Naive thymus-derived CD4-positive, alpha-beta T cell (primary cell): ENCODE measurements at regions of chr14 and their contacts with region 1.

Region 1: DNA sequence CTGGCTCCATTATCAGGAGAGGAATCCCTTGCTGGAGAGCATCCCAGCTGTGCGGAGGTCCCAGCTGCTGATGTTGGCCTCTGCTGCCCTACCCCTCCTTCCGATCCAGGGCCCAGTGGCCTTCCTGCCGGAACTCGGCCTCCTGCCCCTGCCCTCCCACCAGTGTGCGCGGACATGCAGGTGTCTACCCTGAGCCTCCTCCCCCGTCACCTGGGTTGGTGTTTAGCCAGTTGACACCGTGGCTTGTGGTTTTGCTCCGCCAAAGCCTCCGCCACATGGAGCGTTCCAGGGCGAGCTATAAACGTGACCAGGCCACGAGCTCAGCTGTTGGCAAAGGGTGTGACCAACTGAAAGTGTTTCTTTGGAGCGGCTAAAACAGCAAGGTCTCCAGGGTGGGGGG is 1104.3 kb downstream of the BCL11B start:
- DNase-seq: peak in 3 of 9 donors; percentile 34 to 45 (median 39)
- ATAC-seq: peak; percentile 27
- H3K4me3 ChIP-seq: peak overlapping the region; percentile 39
- H3K4me3 Mint-ChIP-seq: peak overlapping the region; percentile 49 to 84 (median 73)
- H3K27ac ChIP-seq: peak overlapping the region; percentile 81
- H3K27ac Mint-ChIP-seq: peak overlapping the region; percentile 83 to 100 (median 97)
- H3K4me1 ChIP-seq: peaks cover 55 to 88% of the 10 kb centered on the region in 2 donors
- H3K4me1 Mint-ChIP-seq: peaks cover 48 to 100% (median 96%) of the 10 kb centered on the region in 7 donors
- H3K27me3 ChIP-seq: no peaks in the 10 kb centered on the region
- H3K27me3 Mint-ChIP-seq: no peaks in the 10 kb centered on the region

Region 2: GRCh38 chr14:98154254-98154653 is 13.5 kb before region 1 on chr14:
- CTCF ChIA-PET with region 1: no interaction called
- POLR2A ChIA-PET with region 1: interaction called, 48 read pairs
- intact Hi-C with region 1: loop called in 1 of 2 experiments (anchors 1 kb)
- DNase-seq: no peak
- ATAC-seq: no peak
- H3K4me3 ChIP-seq: no peak overlapping the region
- H3K4me3 Mint-ChIP-seq: peak overlapping the region in 1 of 10 donors; percentile 42
- H3K27ac ChIP-seq: no peak overlapping the region
- H3K27ac Mint-ChIP-seq: peak overlapping the region in 6 of 9 donors; percentile 5 to 81 (median 35)
- H3K4me1 ChIP-seq: peaks cover 0 to 51% of the 10 kb centered on the region in 2 donors
- H3K4me1 Mint-ChIP-seq: peaks cover 23 to 86% (median 79%) of the 10 kb centered on the region in 7 donors
- H3K27me3 ChIP-seq: no peaks in the 10 kb centered on the region
- H3K27me3 Mint-ChIP-seq: no peaks in the 10 kb centered on the region